ENCODE measurements at regions of chr3 and their contacts with region 1.

Region 1: DNA sequence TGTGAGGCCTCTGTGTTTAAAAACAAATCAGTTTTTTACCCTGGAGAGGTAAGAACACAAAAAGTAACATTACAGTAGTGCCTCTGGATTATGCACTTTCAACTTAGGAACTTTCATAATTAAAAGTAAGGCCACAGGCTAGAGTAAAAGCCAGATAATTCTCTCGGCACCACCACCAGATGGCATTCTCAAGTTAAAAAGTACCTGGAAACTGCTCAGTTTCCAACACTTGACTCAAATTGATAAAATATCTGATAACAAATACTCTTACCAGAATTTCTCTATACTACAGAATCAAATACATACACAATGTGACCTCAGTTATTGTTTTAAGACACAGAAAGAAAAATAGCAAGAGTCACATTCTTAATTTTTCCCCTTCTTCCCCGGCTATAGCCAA is 19.9 kb downstream of the SPICE1 start:
- DNase-seq: peak in 4 of 5 donors; percentile 6 to 64 (median 39)
- H3K4me3 ChIP-seq: no peak overlapping the region
- H3K4me3 Mint-ChIP-seq: no peak overlapping the region
- H3K27ac ChIP-seq: no peak overlapping the region
- H3K27ac Mint-ChIP-seq: peak overlapping the region in 2 of 8 donors; percentile 35 to 40
- H3K4me1 ChIP-seq: no peaks in the 10 kb centered on the region
- H3K4me1 Mint-ChIP-seq: peaks cover 1 to 7% (median 5%) of the 10 kb centered on the region in 3 donors
- H3K27me3 ChIP-seq: no peaks in the 10 kb centered on the region
- H3K27me3 Mint-ChIP-seq: no peaks in the 10 kb centered on the region

Region 2: GRCh38 chr3:113560831-113561623 is 66.0 kb after region 1 on chr3:
- CTCF ChIA-PET with region 1: interaction called, 12 read pairs
- POLR2A ChIA-PET with region 1: no interaction called
- DNase-seq: peak in 2 of 5 donors; percentile 16 to 32
- H3K4me3 ChIP-seq: no peak overlapping the region
- H3K4me3 Mint-ChIP-seq: peak overlapping the region in 2 of 7 donors; percentile 16 to 37
- H3K27ac ChIP-seq: no peak overlapping the region
- H3K27ac Mint-ChIP-seq: peak overlapping the region; percentile 32 to 90 (median 82)
- H3K4me1 ChIP-seq: peaks cover 33% of the 10 kb centered on the region
- H3K4me1 Mint-ChIP-seq: peaks cover 56 to 84% (median 84%) of the 10 kb centered on the region in 3 donors
- H3K27me3 ChIP-seq: no peaks in the 10 kb centered on the region
- H3K27me3 Mint-ChIP-seq: no peaks in the 10 kb centered on the region

Measured in CD8-positive, alpha-beta memory T cell (primary cell).